PC-9 (cell line): ENCODE measurements at regions of chr17 and their contacts with region 1.

Region 1: DNA sequence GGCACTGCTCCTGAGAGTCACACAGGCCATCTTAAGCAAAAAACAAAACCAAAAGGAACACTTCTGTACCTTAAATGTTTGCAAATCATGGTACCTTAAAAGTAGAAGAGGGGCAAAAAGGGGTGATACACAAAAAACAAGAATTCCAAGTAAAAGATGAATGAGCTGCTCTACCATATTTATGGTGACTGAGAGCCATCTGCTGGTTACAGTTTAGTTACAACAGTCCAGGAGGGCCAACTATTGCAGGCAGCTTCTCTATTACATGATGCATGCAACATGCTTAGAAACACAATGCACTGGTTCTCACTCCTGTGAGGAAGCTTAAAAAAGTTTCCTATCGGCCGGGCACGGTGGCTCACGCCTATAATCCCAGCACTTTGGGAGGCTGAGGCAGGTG is 53.5 kb downstream of the STX8 start:
- DNase-seq: peak in 1 of 2 experiments; percentile 17
- H3K4me3 ChIP-seq: no peak overlapping the region
- H3K27ac ChIP-seq: no peak overlapping the region
- H3K4me1 ChIP-seq: no peaks in the 10 kb centered on the region
- H3K27me3 ChIP-seq: no peaks in the 10 kb centered on the region
- CTCF ChIP-seq: peak; percentile 58

Region 2: DNA sequence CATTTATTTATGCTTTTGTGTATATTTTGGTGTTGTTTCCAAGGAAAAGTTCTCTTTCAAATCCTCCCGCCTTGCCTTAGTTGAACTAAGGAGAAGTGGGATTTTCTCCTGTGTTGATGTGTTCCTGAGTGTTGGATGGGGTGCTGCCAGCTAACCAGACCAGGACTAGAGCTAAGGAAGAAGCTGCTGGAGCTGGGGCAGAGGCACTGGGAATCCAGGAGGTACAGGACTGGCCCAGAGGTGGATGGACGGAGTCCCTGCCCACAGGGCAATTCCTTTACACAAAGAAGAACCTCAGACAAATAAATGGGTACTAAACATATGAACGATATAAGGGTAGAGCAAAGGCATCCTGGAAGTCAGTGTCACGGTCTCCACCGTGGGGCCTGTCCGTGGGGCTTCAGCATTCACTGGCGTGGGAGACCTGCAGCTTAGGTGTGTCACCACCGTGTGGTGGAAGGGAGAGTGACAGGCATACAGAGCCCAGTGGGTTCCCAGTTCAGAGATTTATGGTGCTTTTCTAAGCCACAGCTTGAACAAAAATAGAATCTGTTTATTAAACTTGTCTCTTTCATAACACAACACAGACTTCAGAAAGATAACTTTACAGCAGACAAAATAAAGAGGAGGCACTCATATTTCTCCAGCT is 230.0 kb before region 1 on chr17:
- CTCF ChIA-PET with region 1: no interaction called
- POLR2A ChIA-PET with region 1: no interaction called
- intact Hi-C with region 1: loop called (anchors 1 kb)
- DNase-seq: peak in 1 of 2 experiments; percentile 29
- H3K4me3 ChIP-seq: no peak overlapping the region
- H3K27ac ChIP-seq: no peak overlapping the region
- H3K4me1 ChIP-seq: no peaks in the 10 kb centered on the region
- H3K27me3 ChIP-seq: no peaks in the 10 kb centered on the region
- CTCF ChIP-seq: peak; percentile 60